ENCODE measurements at regions of chrX and their contacts with region 1.

Region 1: GRCh38 chrX:123173833-123174232 is 10.2 kb upstream of the GRIA3 start:
- DNase-seq: no peak
- H3K4me3 Mint-ChIP-seq: no peak overlapping the region
- H3K27ac Mint-ChIP-seq: no peak overlapping the region
- H3K4me1 Mint-ChIP-seq: no peaks in the 10 kb centered on the region
- H3K27me3 Mint-ChIP-seq: peaks cover 2% of the 10 kb centered on the region

Region 2: DNA sequence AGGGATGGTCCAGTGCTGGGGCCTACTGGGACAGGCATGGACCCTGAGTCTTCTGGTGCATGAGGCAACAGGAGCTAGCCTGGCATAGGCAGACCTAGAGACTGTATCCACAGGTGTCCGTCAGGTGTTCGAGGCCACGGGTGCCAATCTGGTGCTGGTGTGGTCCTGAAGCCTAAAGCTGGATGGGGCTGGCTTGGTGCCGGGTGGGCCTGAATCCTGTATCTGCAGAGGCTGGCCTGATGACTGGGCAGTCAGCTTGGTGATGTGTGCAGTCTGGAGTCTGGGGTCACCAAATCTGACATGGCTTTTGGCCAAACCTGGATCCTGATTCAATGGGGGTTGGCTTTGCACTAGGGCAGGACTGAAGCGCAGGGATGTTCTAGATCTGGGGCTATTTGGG is 259.6 kb before region 1 on chrX:
- CTCF ChIA-PET with region 1: no interaction called
- intact Hi-C with region 1: no loop called
- DNase-seq: no peak
- H3K4me3 Mint-ChIP-seq: no peak overlapping the region
- H3K27ac Mint-ChIP-seq: no peak overlapping the region
- H3K4me1 Mint-ChIP-seq: no peaks in the 10 kb centered on the region
- H3K27me3 Mint-ChIP-seq: no peaks in the 10 kb centered on the region

Region 3: GRCh38 chrX:123184219-123184857 is 10.5 kb after region 1 on chrX and contains the start of gene GRIA3:
- CTCF ChIA-PET with region 1: no interaction called
- intact Hi-C with region 1: no loop called
- DNase-seq: no peak
- H3K4me3 Mint-ChIP-seq: no peak within 1 kb of the TSS
- H3K27ac Mint-ChIP-seq: no peak within 1 kb of the TSS
- H3K4me1 Mint-ChIP-seq: peaks cover 8% of the 10 kb centered on the region
- H3K27me3 Mint-ChIP-seq: peaks cover 34% of the 10 kb centered on the region
- total RNA-seq, gene GRIA3: not detected

Region 4: GRCh38 chrX:123422877-123423276 is 249.0 kb after region 1 on chrX:
- CTCF ChIA-PET with region 1: no interaction called
- intact Hi-C with region 1: loop called (anchors 2 kb)
- DNase-seq: peak; percentile 8
- H3K4me3 Mint-ChIP-seq: no peak overlapping the region
- H3K27ac Mint-ChIP-seq: no peak overlapping the region
- H3K4me1 Mint-ChIP-seq: no peaks in the 10 kb centered on the region
- H3K27me3 Mint-ChIP-seq: no peaks in the 10 kb centered on the region

Region 5: DNA sequence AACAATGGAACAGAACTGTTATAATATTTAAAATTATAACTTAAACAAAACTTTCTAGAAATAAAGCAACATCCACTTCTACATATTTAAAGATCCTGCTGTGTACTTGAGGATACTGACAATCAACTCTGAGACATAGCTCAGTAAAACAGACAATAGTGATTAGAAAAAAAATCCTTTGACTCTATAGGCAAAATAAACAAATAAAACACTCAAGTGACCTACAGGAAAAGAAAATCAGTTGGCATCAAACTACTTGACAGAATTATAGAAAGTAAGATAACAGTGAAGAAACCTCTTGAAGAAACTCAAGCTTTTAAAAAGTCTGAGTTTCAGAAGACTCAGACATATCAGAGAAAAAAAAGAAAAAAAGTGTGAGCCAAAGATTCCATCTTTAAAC is 614.9 kb after region 1 on chrX:
- CTCF ChIA-PET with region 1: no interaction called
- intact Hi-C with region 1: no loop called
- DNase-seq: no peak
- H3K4me3 Mint-ChIP-seq: no peak overlapping the region
- H3K27ac Mint-ChIP-seq: no peak overlapping the region
- H3K4me1 Mint-ChIP-seq: no peaks in the 10 kb centered on the region
- H3K27me3 Mint-ChIP-seq: no peaks in the 10 kb centered on the region